ENCODE measurements at regions of chr11 and their contacts with region 1.

Region 1: GRCh38 chr11:130737866-130738431 is 178.3 kb downstream of the SNX19 start:
- DNase-seq: peak; percentile 79

Region 2: DNA sequence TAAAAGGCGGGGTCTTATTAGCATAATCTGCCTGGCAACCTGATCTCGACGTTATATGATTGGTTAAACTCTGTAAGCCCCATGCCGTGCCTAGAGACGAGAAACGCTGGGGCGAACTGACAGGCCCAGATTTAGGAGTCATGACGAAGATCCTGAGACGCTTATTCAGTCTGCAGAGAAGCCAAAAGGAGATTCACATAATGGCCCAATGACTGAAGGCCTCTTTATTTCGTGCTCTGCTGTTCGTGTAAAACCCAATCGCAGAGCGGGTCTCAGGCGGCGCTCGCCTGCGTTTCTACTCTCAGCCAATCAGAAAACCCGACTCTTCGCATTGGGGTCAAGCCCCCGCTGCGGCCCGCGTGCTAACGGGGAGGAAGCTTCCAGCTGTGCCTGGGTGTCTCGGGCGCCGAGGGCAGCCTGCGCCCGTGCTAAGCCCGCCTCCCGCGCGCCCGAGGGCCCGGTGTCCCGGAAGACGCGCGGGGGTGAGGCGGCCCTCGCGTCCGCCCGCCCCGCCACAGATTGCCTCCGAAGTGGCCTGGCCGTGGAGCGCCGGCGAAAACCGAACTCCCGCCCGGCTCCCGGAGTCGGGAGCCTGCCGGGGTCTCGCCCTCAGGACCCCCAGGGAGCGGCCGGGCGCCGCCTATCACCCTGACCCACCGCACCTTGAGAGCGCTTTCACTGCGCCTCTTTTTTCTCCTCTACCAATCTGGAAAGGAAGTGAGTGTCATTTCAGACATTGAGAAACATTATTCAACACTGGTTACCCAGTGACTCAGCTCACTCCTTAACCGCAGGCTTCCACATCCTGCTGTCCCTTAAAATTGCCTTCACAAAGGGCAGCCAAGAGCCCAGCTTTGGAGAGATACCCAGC is 734.9 kb before region 1 on chr11:
- intact Hi-C with region 1: no loop called
- DNase-seq: peak; percentile 96

Region 3: DNA sequence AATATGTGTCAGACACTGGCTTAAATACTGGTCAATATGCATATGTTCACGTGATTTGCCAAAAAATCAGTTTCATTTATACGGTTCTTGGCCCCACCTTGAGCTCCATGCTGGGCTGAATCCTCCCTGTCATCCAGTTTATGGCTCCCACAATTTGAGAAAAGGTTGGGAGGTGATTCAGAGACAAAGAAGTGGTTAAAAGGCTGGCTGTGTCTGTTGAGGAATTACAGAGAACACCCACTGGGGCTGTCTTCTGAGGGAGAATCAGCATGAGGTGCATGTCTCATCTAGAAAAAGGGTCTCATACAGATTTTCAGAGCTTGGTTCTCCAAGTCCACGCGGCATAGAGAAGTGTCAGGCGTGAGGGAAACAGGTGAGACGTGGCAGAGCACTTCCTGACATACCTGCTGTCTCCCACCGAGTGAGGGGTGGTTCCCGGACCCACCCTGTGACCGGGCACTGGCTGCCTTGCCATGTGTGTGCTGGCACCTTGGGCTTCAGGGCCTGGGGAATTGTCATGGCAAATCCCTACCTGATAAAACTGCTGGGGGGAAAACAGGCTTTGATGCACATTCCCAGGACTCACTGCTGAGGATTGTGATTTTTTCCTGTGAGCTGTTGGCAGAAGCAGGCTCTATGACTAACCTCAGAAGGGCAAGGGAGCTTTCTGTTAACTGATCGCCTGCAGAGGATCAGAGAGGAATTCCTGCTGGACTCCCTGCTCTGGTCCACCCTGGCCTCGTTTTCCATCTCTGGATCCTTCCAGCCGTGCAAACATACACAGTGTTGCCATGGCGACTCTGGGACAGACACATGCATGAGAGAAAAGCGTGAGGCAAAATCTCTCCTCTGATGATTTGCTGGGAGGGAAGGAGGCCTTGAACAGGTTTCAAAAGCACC is 65.9 kb before region 1 on chr11:
- intact Hi-C with region 1: loop called (anchors 5 kb)
- DNase-seq: no peak

Measured in cardiac septum (tissue), 1 donor.